Activated naive CD4-positive, alpha-beta T cell treated with anti-CD3 and anti-CD28 coated beads for 36 hours (primary cell): ENCODE measurements at regions of chr7 and their contacts with region 1.

Region 1: DNA sequence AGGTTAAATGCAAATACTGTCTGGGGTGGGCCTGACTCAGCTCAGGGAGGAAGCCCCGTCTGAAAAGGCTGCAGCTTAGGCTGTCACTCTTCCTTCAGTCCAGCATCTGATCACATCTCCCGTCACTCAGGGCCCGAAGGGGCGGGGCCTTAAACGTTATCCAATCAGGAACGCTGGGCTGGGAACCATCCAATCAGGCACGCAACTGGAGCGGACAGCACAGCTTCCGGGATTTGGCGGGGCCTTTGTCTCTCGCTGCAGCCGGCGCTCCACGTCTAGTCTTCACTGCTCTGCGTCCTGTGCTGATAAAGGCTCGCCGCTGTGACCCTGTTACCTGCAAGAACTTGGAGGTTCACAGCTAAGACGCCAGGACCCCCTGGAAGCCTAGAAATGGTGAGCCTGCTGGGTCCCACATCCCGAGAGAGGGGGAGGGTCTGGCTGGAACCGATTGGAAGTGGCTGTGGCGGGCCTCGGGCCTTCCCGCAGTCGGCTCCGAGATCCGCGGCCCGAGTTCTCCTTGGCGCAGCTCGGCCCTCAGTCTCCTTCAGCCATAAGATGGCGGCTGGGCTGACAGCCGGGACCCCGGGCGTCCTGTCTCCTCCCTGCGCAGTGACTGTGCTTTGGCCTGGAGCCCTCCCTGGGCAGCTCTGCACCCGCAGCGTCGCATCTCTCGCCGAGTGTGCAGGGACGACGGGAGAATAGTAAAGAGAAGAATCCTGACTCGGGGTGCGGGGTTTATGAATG is at the start of gene ZNF92:
- DNase-seq: peak; percentile 99
- H3K4me3 Mint-ChIP-seq: peak within 1 kb of the TSS; percentile 94
- H3K27ac Mint-ChIP-seq: peak within 1 kb of the TSS; percentile 90
- H3K4me1 Mint-ChIP-seq: peaks cover 32% of the 10 kb centered on the region
- H3K27me3 Mint-ChIP-seq: no peaks in the 10 kb centered on the region
- total RNA-seq, gene ZNF92: 13.6 to 15.5 TPM

Region 2: DNA sequence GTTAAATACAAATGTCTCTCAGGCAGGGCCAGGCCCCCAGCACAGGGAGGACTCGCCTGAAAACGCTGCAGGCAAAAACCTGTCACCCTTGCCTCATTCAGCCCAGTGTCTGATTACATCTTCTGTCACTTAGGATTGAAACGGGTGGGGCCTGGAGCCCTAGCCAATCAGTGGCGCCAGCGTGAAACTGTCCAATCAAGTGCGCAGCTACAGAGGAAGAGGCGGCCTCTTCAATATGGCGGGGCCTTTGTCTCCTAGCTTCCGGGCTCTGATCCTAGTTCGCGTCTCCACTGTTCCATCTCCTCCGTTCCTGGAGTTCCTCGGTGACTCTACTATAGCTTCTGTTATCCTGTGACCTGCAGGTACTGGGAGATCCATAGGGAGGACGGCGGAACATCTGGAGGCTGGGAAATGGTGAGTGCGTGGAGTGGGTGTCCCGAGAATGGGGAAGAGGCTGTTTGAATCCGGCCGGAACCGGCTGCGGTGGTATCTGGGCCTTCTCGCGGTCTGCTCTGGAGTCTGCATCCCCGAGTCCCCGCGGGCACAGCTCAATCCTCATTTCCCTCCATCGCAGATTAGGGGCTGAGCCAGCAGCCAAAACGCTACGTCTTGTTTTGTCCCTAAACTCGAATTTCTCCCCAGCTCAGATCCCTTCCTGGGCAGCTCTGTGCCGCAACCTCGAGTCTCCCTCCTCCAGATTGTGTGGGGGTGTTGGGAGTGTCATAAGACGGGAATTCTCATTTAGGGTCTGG is 1059.9 kb before region 1 on chr7 and contains the start of gene ZNF736:
- CTCF ChIA-PET with region 1: no interaction called
- intact Hi-C with region 1: loop called (anchors 2 kb)
- DNase-seq: peak; percentile 94
- H3K4me3 Mint-ChIP-seq: peak within 1 kb of the TSS; percentile 99
- H3K27ac Mint-ChIP-seq: peak within 1 kb of the TSS; percentile 97
- H3K4me1 Mint-ChIP-seq: peaks cover 35% of the 10 kb centered on the region
- H3K27me3 Mint-ChIP-seq: no peaks in the 10 kb centered on the region
- total RNA-seq, gene ZNF736: 22.7 to 24.0 TPM

Region 3: DNA sequence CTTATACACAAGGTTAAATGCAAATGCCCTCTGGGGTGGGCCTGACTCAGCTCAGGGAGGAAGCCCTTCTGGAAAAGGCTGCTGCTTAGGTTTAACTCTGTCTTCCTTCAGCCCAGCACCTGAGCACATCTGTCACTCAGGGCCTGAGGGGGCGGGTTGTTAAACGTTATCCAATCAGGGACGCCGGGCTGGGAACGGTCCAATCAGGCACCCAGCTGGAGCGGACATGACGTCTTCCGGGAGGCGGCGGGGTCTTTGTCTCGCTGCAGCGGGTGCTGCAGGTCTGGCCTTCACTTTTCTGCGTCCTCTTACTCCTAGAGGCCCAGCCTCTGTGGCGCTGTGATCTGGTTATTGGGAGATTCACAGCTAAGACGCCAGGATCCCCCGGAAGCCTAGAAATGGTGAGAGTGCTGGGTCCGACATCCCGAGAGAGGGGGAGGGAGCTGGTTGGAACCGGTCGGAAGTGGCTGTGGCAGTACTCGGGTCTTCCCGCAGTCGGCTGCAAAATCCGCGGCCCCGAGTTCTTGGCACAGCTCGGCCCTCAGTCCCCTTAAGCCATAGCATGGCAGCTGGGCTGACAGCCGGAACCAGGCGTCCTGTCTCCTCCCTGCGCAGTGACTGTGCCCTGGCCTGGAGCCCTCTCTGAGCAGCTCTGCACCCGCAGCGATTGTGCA is 579.5 kb before region 1 on chr7 and contains the start of gene ZNF138:
- CTCF ChIA-PET with region 1: no interaction called
- intact Hi-C with region 1: loop called (anchors 2 kb)
- DNase-seq: peak; percentile 98
- H3K4me3 Mint-ChIP-seq: peak within 1 kb of the TSS; percentile 97
- H3K27ac Mint-ChIP-seq: peak within 1 kb of the TSS; percentile 95
- H3K4me1 Mint-ChIP-seq: peaks cover 26% of the 10 kb centered on the region
- H3K27me3 Mint-ChIP-seq: no peaks in the 10 kb centered on the region
- total RNA-seq, gene ZNF138: 10.6 to 10.7 TPM

Region 4: GRCh38 chr7:65216459-65216858 is 157.3 kb before region 1 on chr7:
- CTCF ChIA-PET with region 1: no interaction called
- intact Hi-C with region 1: loop called (anchors 5 kb)
- DNase-seq: peak; percentile 74
- H3K4me3 Mint-ChIP-seq: no peak overlapping the region
- H3K27ac Mint-ChIP-seq: no peak overlapping the region
- H3K4me1 Mint-ChIP-seq: no peaks in the 10 kb centered on the region
- H3K27me3 Mint-ChIP-seq: no peaks in the 10 kb centered on the region

Region 5: GRCh38 chr7:65325793-65326432 is 47.9 kb before region 1 on chr7:
- CTCF ChIA-PET with region 1: no interaction called
- intact Hi-C with region 1: no loop called
- DNase-seq: no peak
- H3K4me3 Mint-ChIP-seq: no peak overlapping the region
- H3K27ac Mint-ChIP-seq: no peak overlapping the region
- H3K4me1 Mint-ChIP-seq: peaks cover 2% of the 10 kb centered on the region
- H3K27me3 Mint-ChIP-seq: no peaks in the 10 kb centered on the region

Region 6: GRCh38 chr7:65750511-65751344 is 376.9 kb after region 1 on chr7:
- CTCF ChIA-PET with region 1: no interaction called
- intact Hi-C with region 1: loop called (anchors 10 kb)
- DNase-seq: peak; percentile 89
- H3K4me3 Mint-ChIP-seq: peak overlapping the region; percentile 84
- H3K27ac Mint-ChIP-seq: peak overlapping the region; percentile 98
- H3K4me1 Mint-ChIP-seq: peaks cover 40% of the 10 kb centered on the region
- H3K27me3 Mint-ChIP-seq: no peaks in the 10 kb centered on the region

Region 7: DNA sequence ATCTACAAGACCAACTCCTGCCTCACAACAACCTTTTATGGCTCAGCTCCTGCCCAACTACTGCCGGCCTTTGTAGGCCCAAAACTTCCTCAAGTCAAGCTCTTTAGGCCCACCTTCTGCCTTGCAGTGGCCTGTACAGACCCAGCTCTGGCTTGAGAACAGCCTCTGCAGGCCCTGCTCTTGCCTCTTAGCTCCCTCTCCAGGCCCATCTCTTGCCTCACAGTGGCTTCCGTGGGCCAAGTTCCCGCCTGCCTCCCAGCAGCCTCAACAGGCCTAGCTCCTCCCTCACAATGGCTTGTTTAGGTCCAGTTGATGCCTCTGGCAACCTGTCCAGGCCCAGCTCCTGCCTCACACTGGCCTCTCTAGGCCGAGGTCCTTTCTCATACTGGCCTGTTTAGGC is 466.7 kb after region 1 on chr7:
- CTCF ChIA-PET with region 1: no interaction called
- intact Hi-C with region 1: no loop called
- DNase-seq: peak; percentile 48
- H3K4me3 Mint-ChIP-seq: no peak overlapping the region
- H3K27ac Mint-ChIP-seq: no peak overlapping the region
- H3K4me1 Mint-ChIP-seq: peaks cover under 1% of the 10 kb centered on the region
- H3K27me3 Mint-ChIP-seq: no peaks in the 10 kb centered on the region